Activated CD4-positive, alpha-beta T cell treated with anti-CD3 and anti-CD28 coated beads for 36 hours (primary cell): ENCODE measurements at regions of chr21 and their contacts with region 1.

Region 1: GRCh38 chr21:42258153-42258884 is 39.4 kb downstream of the ABCG1 start:
- DNase-seq: peak; percentile 90
- ATAC-seq: peak; percentile 98
- H3K4me3 Mint-ChIP-seq: no peak overlapping the region
- H3K27ac Mint-ChIP-seq: no peak overlapping the region
- H3K4me1 Mint-ChIP-seq: peaks cover 18% of the 10 kb centered on the region
- H3K27me3 Mint-ChIP-seq: no peaks in the 10 kb centered on the region

Region 2: GRCh38 chr21:42145569-42146272 is 112.6 kb before region 1 on chr21:
- CTCF ChIA-PET with region 1: interaction called, 93 read pairs
- POLR2A ChIA-PET with region 1: no interaction called
- intact Hi-C with region 1: loop called (anchors 1 kb)
- DNase-seq: peak; percentile 80
- ATAC-seq: peak; percentile 81
- H3K4me3 Mint-ChIP-seq: no peak overlapping the region
- H3K27ac Mint-ChIP-seq: peak overlapping the region; percentile 38
- H3K4me1 Mint-ChIP-seq: peaks cover 10% of the 10 kb centered on the region
- H3K27me3 Mint-ChIP-seq: peaks cover 2% of the 10 kb centered on the region

Region 3: GRCh38 chr21:42164064-42164789 is 94.1 kb before region 1 on chr21:
- CTCF ChIA-PET with region 1: interaction called, 51 read pairs
- POLR2A ChIA-PET with region 1: no interaction called
- intact Hi-C with region 1: loop called (anchors 1 kb)
- DNase-seq: peak; percentile 79
- ATAC-seq: peak; percentile 72
- H3K4me3 Mint-ChIP-seq: no peak overlapping the region
- H3K27ac Mint-ChIP-seq: peak overlapping the region; percentile 17
- H3K4me1 Mint-ChIP-seq: peaks cover 31% of the 10 kb centered on the region
- H3K27me3 Mint-ChIP-seq: no peaks in the 10 kb centered on the region

Region 4: DNA sequence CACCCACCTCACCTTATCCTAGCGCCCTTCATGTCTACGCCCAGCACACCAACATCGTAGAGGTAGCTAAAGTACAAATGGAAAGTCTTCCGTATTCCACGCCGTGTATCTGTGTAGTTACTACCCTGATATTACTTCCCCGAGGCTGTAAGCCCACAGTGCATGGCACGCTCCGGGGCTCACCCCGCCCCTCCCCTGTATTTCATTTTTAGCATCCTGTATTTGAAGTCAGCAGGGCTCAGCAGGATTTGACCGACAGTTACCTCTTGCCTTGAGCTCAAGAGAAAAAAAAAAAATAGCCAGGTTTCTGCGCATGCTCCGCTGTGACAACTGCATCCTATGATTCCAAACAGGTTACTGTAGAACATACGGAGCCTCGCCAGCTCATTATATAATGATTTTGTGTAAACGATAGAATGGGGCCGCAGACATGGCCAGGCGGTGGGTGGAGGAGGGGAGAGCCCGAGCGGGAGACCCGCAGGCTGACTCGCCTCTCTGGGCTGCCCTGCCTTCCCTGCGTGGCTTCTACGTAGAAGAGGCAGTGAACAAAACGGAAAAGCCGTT is 38.1 kb before region 1 on chr21:
- CTCF ChIA-PET with region 1: interaction called, 24 read pairs
- POLR2A ChIA-PET with region 1: interaction called, 3 read pairs
- intact Hi-C with region 1: loop called in 1 of 2 experiments (anchors 1 kb)
- DNase-seq: peak; percentile 82
- ATAC-seq: peak; percentile 89
- H3K4me3 Mint-ChIP-seq: peak overlapping the region; percentile 90
- H3K27ac Mint-ChIP-seq: peak overlapping the region; percentile 96
- H3K4me1 Mint-ChIP-seq: peaks cover 24% of the 10 kb centered on the region
- H3K27me3 Mint-ChIP-seq: no peaks in the 10 kb centered on the region

Region 5: DNA sequence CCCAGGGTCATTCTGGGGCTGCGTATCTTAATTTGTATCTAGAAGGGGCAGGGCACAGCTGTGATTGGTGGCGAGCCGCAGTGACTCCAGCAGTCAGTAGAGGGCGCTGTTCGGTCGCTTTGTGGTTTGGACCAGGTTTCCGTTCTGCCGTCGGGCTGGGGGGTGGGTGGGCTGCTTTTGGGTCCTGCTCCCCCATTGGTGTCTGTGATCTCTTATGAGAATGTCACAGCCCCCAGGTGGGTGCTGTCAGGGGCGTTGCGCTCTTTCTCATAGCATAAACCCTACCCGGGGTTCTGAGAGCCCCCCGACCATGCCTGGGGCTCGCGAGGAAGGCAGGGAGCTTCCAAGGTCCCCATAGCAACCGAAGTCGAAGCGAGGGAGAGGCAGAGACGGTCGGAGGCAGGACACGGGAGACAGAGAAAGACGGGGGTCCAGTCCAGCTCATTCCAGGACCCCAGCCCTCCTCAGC is 51.5 kb after region 1 on chr21:
- CTCF ChIA-PET with region 1: interaction called, 11 read pairs
- POLR2A ChIA-PET with region 1: no interaction called
- intact Hi-C with region 1: no loop called
- DNase-seq: peak; percentile 88
- ATAC-seq: peak; percentile 89
- H3K4me3 Mint-ChIP-seq: no peak overlapping the region
- H3K27ac Mint-ChIP-seq: no peak overlapping the region
- H3K4me1 Mint-ChIP-seq: no peaks in the 10 kb centered on the region
- H3K27me3 Mint-ChIP-seq: peaks cover 2% of the 10 kb centered on the region